Activated T-helper 2 cell treated with anti-CD3 and anti-CD28 coated beads, Interferon-gamma antibody, Interleukin-2, Interleukin-4, amounts not matched to agents 10 μg/mL and 5 μg/mL and 100 μg/mL, durations not matched to agents 14 hours and 24 hours and 36 hours (primary cell): ENCODE measurements at regions of chr12 and their contacts with region 1.

Region 1: DNA sequence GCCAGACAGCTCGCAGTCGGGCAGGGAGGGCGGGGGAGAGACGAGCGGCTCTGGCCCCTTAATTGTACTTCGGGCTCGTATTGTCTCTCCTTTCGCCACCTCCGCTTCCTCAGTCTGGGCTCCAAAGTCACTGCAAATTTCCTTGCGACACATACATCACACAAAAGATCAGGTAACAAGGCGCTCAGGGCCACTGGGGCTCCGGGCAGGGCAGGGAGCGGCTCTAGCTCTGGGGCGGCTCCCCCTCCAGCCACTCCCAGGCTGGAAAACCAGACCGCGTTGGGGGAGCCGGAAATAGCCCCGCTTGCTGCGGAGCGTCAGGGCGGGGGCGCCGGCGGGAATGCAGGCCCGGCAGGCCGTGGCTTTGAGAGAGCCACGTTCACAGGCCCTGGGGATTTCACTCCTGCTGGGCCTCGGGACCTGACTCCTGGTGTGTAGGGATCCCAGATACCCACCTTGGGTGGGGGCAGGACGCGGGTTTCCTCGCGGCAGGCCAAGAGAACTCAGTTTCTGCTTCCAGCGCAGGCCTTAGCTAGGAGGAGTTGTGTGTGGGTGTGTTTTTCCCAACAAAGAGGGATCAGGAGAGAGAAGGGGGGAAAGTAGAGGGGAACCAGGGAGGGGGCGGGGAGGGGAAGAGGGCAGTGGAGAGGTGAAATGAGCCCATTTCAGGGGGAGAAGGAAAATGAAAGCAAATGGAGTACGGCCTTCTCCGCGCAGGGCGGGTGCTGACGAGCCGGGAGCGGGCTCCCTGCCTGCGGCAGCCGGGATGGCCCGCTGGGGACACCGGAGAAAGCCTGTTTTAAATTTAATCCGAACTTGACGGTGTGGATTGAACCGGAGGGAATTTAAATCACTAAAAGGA is 4.4 kb upstream of the HOXC9 start:
- DNase-seq: no peak
- H3K4me3 Mint-ChIP-seq: peak overlapping the region; percentile 59
- H3K27ac Mint-ChIP-seq: no peak overlapping the region
- H3K4me1 Mint-ChIP-seq: peaks cover 18% of the 10 kb centered on the region
- H3K27me3 Mint-ChIP-seq: peaks cover 90% of the 10 kb centered on the region

Region 2: GRCh38 chr12:53844989-53845844 is 150.4 kb before region 1 on chr12:
- intact Hi-C with region 1: no loop called
- DNase-seq: no peak
- H3K4me3 Mint-ChIP-seq: no peak overlapping the region
- H3K27ac Mint-ChIP-seq: no peak overlapping the region
- H3K4me1 Mint-ChIP-seq: no peaks in the 10 kb centered on the region
- H3K27me3 Mint-ChIP-seq: peaks cover 28% of the 10 kb centered on the region

Region 3: GRCh38 chr12:53952871-53953734 is 42.5 kb before region 1 on chr12:
- intact Hi-C with region 1: loop called (anchors 2 kb)
- DNase-seq: no peak
- H3K4me3 Mint-ChIP-seq: no peak overlapping the region
- H3K27ac Mint-ChIP-seq: peak overlapping the region; percentile 53
- H3K4me1 Mint-ChIP-seq: peaks cover 3% of the 10 kb centered on the region
- H3K27me3 Mint-ChIP-seq: peaks cover 95% of the 10 kb centered on the region

Region 4: GRCh38 chr12:53961025-53961761 is 34.4 kb before region 1 on chr12:
- intact Hi-C with region 1: loop called (anchors 5 kb)
- DNase-seq: no peak
- H3K4me3 Mint-ChIP-seq: no peak overlapping the region
- H3K27ac Mint-ChIP-seq: no peak overlapping the region
- H3K4me1 Mint-ChIP-seq: peaks cover 4% of the 10 kb centered on the region
- H3K27me3 Mint-ChIP-seq: peaks cover 84% of the 10 kb centered on the region

Region 5: GRCh38 chr12:53984901-53985709 is 10.5 kb before region 1 on chr12 and contains the start of gene HOXC10:
- intact Hi-C with region 1: loop called (anchors 2 kb)
- DNase-seq: peak; percentile 69
- H3K4me3 Mint-ChIP-seq: peak within 1 kb of the TSS; percentile 7
- H3K27ac Mint-ChIP-seq: no peak within 1 kb of the TSS
- H3K4me1 Mint-ChIP-seq: peaks cover 20% of the 10 kb centered on the region
- H3K27me3 Mint-ChIP-seq: peaks cover 90% of the 10 kb centered on the region
- total RNA-seq, gene HOXC10: not detected in 2 replicates

Region 6: DNA sequence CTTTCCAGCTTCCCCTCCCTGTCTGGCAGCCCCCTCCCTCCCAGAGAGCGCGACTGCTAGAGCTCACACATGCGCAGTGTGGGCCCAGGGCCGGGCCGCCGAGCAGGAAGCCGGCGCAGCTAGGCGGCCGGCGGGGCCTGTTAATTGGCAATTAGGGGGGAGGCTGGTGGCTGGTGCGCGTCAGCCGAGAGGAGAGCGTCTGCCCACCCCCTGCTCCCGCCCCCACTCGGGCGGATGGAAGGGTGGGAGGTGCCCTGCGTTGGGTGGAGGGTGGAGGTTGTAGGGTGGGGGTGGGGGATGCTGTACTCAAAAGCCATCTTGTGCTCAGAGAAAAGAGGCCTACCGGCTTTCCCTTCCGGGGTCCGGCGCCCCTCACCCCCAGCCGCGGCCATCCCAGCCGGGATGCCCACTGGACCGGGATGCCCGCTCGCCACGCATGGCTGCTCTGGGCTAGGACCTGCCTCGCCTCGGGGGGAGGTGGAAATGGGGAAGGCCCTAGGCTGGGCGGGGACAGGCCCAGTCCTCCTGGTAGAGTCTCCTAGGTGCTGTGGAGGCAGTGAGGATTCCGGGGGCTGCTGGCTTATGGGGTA is 22.4 kb after region 1 on chr12:
- intact Hi-C with region 1: loop called (anchors 2 kb)
- DNase-seq: peak; percentile 67
- H3K4me3 Mint-ChIP-seq: peak overlapping the region; percentile 81
- H3K27ac Mint-ChIP-seq: peak overlapping the region; percentile 18
- H3K4me1 Mint-ChIP-seq: peaks cover 17% of the 10 kb centered on the region
- H3K27me3 Mint-ChIP-seq: peaks cover 75% of the 10 kb centered on the region

Region 7: GRCh38 chr12:54053751-54054741 is 58.4 kb after region 1 on chr12 and contains the start of gene HOXC4:
- intact Hi-C with region 1: loop called (anchors 5 kb)
- DNase-seq: no peak
- H3K4me3 Mint-ChIP-seq: peak within 1 kb of the TSS; percentile 31
- H3K27ac Mint-ChIP-seq: peak within 1 kb of the TSS; percentile 25
- H3K4me1 Mint-ChIP-seq: peaks cover 18% of the 10 kb centered on the region
- H3K27me3 Mint-ChIP-seq: peaks cover 87% of the 10 kb centered on the region
- total RNA-seq, gene HOXC4: 0.14 and 0.21 TPM in 2 replicates